Endothelial cell of umbilical vein (primary cell): ENCODE measurements at regions of chr9 and their contacts with region 1.

Region 1: GRCh38 chr9:127214421-127215267 is 49.9 kb upstream of the GARNL3 start:
- DNase-seq: peak; percentile 52
- H3K4me3 ChIP-seq: no peak overlapping the region
- H3K27ac ChIP-seq: no peak overlapping the region
- H3K4me1 ChIP-seq: no peaks in the 10 kb centered on the region
- H3K27me3 ChIP-seq: peaks cover 0 to 5% of the 10 kb centered on the region in 2 experiments
- CTCF ChIP-seq: peak; percentile 79 to 91
- POLR2A ChIP-seq: no peak

Region 2: GRCh38 chr9:127233989-127234388 is 19.3 kb after region 1 on chr9:
- CTCF ChIA-PET with region 1: no interaction called
- POLR2A ChIA-PET with region 1: no interaction called
- dilution Hi-C with region 1: no loop called
- intact Hi-C with region 1: no loop called
- DNase-seq: no peak
- H3K4me3 ChIP-seq: no peak overlapping the region
- H3K27ac ChIP-seq: no peak overlapping the region
- H3K4me1 ChIP-seq: no peaks in the 10 kb centered on the region
- H3K27me3 ChIP-seq: no peaks in the 10 kb centered on the region
- CTCF ChIP-seq: no peak
- POLR2A ChIP-seq: no peak

Region 3: DNA sequence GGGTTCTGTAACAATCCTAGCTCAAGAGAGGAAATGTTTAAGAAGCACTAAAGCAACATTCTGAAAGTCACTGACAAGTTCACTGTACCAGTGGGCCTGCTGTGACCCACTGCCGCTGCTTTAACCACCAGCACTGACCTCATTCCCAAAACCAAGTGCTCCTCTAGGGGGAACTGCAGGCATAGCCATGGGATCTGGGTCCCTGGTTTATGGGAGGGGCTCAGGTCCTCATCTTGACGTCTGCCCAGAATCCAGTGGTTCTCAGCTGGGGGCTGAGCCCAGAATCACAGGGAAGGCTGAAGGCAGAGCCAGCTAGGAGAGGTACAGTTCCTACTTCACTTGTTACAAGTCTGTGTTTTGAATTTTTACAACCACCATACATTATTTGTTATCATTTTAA is 146.2 kb after region 1 on chr9:
- CTCF ChIA-PET with region 1: interaction called, 16 read pairs
- POLR2A ChIA-PET with region 1: no interaction called
- dilution Hi-C with region 1: no loop called
- intact Hi-C with region 1: no loop called
- DNase-seq: no peak
- H3K4me3 ChIP-seq: no peak overlapping the region
- H3K27ac ChIP-seq: no peak overlapping the region
- H3K4me1 ChIP-seq: no peaks in the 10 kb centered on the region
- H3K27me3 ChIP-seq: no peaks in the 10 kb centered on the region
- CTCF ChIP-seq: no peak
- POLR2A ChIP-seq: no peak

Region 4: GRCh38 chr9:127396808-127397497 is 182.3 kb after region 1 on chr9 and contains the start of gene SLC2A8:
- CTCF ChIA-PET with region 1: interaction called, 19 read pairs
- POLR2A ChIA-PET with region 1: no interaction called
- dilution Hi-C with region 1: no loop called
- intact Hi-C with region 1: loop called (anchors 1 kb)
- DNase-seq: peak; percentile 100
- H3K4me3 ChIP-seq: peak within 1 kb of the TSS; percentile 42 to 85 (median 60)
- H3K27ac ChIP-seq: peak within 1 kb of the TSS; percentile 5
- H3K4me1 ChIP-seq: peaks cover 9% of the 10 kb centered on the region
- H3K27me3 ChIP-seq: peaks cover 2 to 4% of the 10 kb centered on the region in 2 experiments
- CTCF ChIP-seq: no peak
- POLR2A ChIP-seq: peak; percentile 62
- total RNA-seq, gene SLC2A8: 17.0 and 19.3 TPM in 2 replicates

Region 5: DNA sequence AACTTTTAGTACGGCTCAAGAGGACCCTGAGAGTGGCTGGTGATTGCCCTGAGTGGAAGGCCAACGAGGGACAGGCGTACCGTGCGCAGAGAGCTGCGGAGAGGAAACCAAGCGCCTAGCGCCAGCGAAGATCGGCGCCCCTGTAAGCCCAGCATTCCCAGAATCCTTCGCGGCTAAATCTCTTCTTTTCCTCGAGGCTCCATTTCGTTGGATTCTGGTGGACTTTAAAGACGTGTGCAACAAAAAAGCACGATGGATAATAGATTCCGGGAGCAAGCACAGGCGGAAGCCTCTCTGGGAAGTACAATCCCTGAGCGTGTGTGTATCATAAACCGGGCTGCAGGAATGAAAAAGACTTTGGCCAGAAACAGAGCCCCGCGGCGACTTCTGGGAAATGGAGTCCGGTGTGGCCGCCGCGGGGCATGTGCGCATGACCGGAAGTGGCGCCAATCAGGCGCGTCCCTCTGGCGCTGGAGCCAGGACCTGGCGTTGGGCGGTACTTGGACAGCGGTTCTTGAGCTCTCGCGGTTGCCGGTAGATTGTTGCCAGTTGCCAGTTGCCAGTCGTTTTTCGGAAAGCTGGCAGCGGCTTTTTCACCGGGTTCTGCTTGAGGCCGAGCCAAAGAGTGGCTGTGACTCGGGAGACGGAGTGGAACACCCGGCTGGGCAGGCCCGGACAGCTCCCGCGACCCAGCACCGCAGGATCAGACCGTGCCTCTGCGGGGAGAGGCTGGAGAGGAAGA is 209.5 kb after region 1 on chr9 and contains the start of gene ZNF79:
- CTCF ChIA-PET with region 1: interaction called, 11 read pairs
- POLR2A ChIA-PET with region 1: no interaction called
- dilution Hi-C with region 1: no loop called
- intact Hi-C with region 1: loop called (anchors 1 kb)
- DNase-seq: peak; percentile 97
- H3K4me3 ChIP-seq: peak within 1 kb of the TSS; percentile 54 to 90 (median 62)
- H3K27ac ChIP-seq: peak within 1 kb of the TSS; percentile 79
- H3K4me1 ChIP-seq: peaks cover 25% of the 10 kb centered on the region
- H3K27me3 ChIP-seq: no peaks in the 10 kb centered on the region
- CTCF ChIP-seq: no peak
- POLR2A ChIP-seq: peak; percentile 86
- total RNA-seq, gene ZNF79: 8.9 and 10.6 TPM in 2 replicates